Mammary epithelial cell (primary cell): ENCODE measurements at regions of chr9 and their contacts with region 1.

Region 1: GRCh38 chr9:10562581-10563343 is 50.0 kb downstream of the PTPRD start:
- DNase-seq: peak; percentile 88
- H3K4me3 ChIP-seq: no peak overlapping the region
- H3K27ac ChIP-seq: peak overlapping the region; percentile 88
- H3K4me1 ChIP-seq: peaks cover 11% of the 10 kb centered on the region
- H3K27me3 ChIP-seq: no peaks in the 10 kb centered on the region
- CTCF ChIP-seq: no peak

Region 2: DNA sequence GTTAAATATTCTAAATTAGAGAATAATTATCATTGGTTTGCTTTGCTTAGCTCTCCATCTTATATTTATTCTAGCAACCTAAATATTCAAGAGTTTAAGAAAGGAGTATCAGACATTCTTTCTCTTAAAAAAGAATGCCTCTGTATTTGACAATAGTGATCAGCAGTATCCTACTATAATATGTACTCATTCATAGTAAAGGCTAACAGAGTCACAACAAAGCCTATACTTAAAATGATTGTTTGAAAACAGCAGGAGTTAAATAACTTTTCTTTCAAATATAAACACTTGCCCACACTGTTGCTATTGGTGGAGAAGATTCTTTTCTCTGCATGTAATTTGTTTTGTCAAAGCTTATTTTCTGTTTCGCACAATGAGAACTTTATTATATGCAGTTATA is 128.3 kb before region 1 on chr9:
- CTCF ChIA-PET with region 1: no interaction called
- dilution Hi-C with region 1: no loop called
- in situ Hi-C with region 1: no loop called
- intact Hi-C with region 1: no loop called
- DNase-seq: no peak
- H3K4me3 ChIP-seq: no peak overlapping the region
- H3K27ac ChIP-seq: no peak overlapping the region
- H3K4me1 ChIP-seq: no peaks in the 10 kb centered on the region
- H3K27me3 ChIP-seq: no peaks in the 10 kb centered on the region
- CTCF ChIP-seq: no peak

Region 3: GRCh38 chr9:10661376-10661775 is 98.6 kb after region 1 on chr9:
- CTCF ChIA-PET with region 1: no interaction called
- dilution Hi-C with region 1: no loop called
- in situ Hi-C with region 1: loop called in 1 of 2 experiments (anchors 25 kb)
- intact Hi-C with region 1: no loop called
- DNase-seq: peak; percentile 0
- H3K4me3 ChIP-seq: no peak overlapping the region
- H3K27ac ChIP-seq: no peak overlapping the region
- H3K4me1 ChIP-seq: no peaks in the 10 kb centered on the region
- H3K27me3 ChIP-seq: no peaks in the 10 kb centered on the region
- CTCF ChIP-seq: no peak